ENCODE measurements at regions of chr19 and their contacts with region 1.

Region 1: GRCh38 chr19:18414504-18415177 is 4.6 kb upstream of the SSBP4 start:
- DNase-seq: no peak
- ATAC-seq: no peak
- H3K4me3 ChIP-seq: no peak overlapping the region
- H3K27ac ChIP-seq: peak overlapping the region in 2 of 4 donors; percentile 71 to 83
- H3K4me1 ChIP-seq: peaks cover 35% of the 10 kb centered on the region
- H3K27me3 ChIP-seq: no peaks in the 10 kb centered on the region
- CTCF ChIP-seq: no peak
- POLR2A ChIP-seq: no peak

Region 2: DNA sequence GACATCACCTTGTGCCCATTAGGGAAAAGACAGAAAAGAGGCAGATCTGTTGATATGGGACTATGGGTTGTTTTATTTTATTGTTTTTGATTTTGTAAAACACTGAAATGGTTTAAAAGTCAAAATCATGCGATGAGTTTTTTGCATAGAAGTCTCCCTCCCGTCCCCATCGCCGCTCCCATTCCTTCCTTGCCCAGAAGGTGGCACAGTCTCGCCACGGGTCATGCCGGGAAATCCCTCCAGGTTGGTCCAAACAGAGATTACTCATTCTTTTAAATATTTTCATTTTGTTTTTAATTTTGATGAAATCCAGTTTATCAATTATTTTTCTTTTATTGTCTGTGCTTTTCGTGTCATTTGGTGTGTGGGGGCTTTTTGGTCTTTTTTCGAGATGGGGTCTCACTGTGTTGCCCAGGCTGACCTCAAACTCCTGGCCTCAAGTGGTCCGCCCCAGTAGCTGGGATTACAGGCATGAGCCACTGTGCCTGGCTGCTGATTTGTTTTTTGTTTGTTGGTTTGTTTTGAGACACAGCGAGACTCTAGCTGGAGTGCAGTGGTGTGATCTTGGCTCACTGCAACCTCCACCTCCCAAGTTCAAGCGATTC is 65.0 kb before region 1 on chr19:
- intact Hi-C with region 1: loop called (anchors 5 kb)
- DNase-seq: peak; percentile 67 to 72 (median 70)
- ATAC-seq: peak; percentile 80
- H3K4me3 ChIP-seq: no peak overlapping the region
- H3K27ac ChIP-seq: no peak overlapping the region
- H3K4me1 ChIP-seq: no peaks in the 10 kb centered on the region
- H3K27me3 ChIP-seq: no peaks in the 10 kb centered on the region
- CTCF ChIP-seq: peak; percentile 77 to 94 (median 88)
- POLR2A ChIP-seq: no peak